ENCODE measurements at regions of chr15 and their contacts with region 1.

Region 1: DNA sequence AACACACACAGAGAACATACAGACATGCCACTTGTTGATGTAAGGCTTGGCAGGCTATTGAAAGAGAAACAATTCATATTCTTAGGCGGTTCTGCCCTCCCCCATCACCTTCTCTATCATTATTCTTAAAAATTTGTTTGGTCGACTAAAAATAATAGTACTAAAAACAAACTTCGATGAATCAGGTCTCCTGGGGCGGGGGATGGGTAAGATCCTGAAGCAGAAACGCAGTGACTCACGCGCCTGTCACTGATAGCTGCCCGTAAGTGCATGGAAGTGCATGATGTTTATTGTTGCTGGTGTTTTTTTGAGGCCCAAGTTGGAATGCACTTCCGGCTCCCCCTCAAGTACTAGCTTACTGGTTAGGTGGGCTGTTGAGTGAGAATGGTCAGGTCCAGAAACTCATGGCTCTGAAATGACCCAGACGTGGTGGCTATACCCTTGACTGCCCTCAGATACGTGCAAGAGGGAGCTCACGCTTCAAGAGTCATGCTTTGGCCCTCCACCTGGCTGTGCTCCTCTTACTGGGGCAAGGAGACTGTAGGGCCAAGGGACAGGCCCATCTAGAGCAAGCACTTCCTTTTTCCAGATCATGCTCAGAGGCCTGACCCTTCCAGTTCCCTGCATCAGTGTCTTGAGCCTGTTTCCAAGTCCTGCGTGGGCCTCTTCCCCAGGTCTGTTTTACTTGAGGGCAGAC is 10.9 kb downstream of the SMAD3 start:
- DNase-seq: no peak
- ATAC-seq: no peak

Region 2: GRCh38 chr15:67254238-67255175 is 178.2 kb after region 1 on chr15 and contains the starts of genes AAGAB and IQCH:
- intact Hi-C with region 1: loop called (anchors 10 kb)
- DNase-seq: peak; percentile 99
- ATAC-seq: peak; percentile 100
- total RNA-seq, gene AAGAB: 18.1 TPM
- total RNA-seq, gene IQCH: 1.6 TPM

Region 3: DNA sequence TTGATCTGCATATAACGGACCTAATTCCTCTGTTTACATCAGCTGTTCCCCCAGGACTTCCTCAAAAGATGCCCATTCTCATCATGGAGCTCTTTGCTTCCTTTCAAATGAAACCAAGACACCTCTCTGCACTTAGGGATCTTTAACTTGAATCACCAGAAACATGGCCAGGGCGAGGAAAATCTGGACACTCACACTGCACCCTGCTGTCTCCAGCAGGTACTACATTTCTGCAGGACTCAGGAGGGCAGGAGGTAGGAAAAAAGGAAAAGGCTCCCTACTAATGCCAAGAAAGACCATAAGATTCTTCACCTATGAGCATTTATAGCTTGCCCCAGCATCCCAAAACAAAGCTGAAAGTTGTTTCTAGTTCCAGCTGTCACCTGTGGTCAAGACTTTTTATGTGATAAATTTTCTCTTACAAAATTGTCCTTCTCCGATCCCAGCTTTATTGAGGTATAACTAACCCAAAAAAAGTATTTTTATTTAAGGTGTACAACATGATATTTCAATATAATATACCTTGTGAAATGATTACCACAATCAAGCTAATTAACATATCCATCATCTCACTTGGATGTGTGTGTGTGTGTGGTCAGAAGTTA is 357.3 kb after region 1 on chr15:
- intact Hi-C with region 1: no loop called
- DNase-seq: no peak
- ATAC-seq: peak; percentile 60